ENCODE measurements at regions of chr15 and their contacts with region 1.

Region 1: DNA sequence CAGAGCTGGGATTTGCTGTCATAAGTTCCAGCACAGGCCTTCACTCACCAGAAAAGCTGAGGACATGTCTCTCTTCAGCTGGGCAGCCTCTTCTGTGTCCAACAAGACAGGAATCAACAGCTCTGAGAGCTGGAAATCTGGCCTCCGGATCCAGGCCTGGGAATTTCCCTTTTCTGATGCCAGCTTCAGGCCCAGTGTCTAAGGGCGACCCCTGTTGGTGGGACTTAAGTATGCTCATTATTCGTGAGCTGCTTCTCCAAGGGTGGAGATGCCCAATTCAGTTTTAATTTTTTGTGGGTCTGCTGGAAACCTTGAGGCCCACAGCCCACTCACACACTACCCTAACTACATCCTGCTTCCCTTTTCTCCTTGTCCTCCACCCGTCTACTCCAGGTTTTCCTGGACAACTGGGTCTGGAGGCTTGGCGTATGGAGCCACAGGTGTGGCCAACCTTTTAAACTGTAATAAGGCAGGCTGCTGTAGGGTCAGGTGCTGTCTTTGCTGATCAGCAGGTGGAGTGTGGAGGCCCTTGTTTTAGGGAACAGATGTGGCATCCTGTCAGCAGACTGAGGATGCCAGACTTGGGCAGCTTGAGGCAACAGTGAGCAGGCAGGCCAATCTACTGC is 2.6 kb upstream of the CEMIP start:
- DNase-seq: peak; percentile 77
- CTCF ChIP-seq: peak; percentile 82

Region 2: DNA sequence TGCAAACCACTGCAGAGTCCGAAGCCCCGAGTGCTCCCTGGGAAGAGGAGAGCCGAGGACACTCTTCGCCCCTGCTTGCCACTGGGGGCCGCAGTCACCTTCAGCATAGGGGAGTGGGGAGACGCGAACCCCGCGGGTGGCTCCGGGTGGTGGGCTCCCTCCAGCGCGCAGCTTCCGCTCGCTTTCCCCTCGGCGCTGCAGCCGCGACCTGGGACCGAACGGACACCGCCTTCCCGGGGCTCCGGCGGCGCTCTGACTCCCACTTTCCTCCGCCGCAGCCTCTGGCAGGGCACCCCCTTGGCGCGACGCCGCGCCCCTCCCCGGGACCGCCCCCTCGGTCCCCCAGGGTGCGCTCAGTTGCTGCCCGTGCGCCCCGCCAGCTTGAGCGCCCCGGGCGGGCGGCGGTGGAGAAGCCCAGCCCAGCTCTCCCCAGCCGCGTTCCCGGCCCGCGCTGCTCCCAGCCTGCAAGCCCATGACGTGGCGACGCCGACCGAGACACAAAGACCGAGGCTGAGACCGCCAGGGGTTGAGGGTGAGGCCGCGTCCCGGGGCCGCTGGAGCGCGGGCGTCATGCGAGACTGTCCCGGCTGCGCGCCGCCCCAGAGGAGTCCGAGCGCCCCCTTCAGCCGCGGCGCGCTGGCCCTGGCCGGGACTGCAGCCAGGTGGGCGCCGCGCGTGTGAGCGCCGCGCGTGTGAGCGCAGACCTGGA is 1344.7 kb before region 1 on chr15 and contains the start of gene MINAR1:
- CTCF ChIA-PET with region 1: no interaction called
- POLR2A ChIA-PET with region 1: no interaction called
- DNase-seq: peak; percentile 29
- CTCF ChIP-seq: no peak

Region 3: DNA sequence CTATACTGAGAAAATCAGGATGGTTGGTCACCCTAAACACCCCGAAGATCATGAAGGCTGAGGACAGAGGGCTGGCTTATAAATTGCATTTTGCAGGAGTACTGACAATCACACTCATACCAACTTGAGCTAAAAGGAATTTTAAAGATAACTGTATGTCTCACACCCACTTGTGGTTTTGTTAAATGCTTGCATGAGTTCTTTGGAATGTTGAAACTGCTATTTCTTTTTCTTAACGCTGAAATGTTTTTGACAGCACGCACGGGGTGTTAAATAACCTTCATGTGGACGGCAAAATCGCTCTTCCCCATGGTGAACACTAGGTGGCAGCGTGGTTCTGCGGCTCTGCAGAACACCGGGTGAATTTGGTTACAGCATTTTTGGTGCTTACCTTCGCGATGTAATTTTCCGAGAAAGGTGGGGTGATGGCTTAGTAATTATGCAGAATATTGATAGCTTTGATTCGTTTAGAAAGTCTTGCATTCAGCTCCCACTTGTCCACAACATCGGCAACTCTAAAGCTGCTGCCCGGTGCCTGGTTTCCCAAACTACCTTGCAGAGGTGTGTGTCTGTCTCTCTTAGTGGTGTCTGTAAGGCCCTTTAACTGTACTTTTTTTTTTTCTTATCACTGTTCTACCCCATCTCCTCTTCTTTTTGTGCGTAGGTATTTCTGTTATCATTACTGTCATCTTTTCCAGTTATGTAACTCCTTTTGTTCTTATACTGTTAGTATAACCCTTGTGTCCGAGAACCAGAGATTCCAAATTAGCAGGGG is 320.7 kb before region 1 on chr15:
- CTCF ChIA-PET with region 1: interaction called, 100 read pairs
- POLR2A ChIA-PET with region 1: no interaction called
- DNase-seq: peak; percentile 72
- CTCF ChIP-seq: peak; percentile 91

Region 4: GRCh38 chr15:80567721-80568157 is 208.8 kb before region 1 on chr15:
- CTCF ChIA-PET with region 1: interaction called, 53 read pairs
- POLR2A ChIA-PET with region 1: no interaction called
- DNase-seq: peak; percentile 49
- CTCF ChIP-seq: peak; percentile 40

Region 5: GRCh38 chr15:80789296-80789695 is 12.8 kb after region 1 on chr15:
- CTCF ChIA-PET with region 1: interaction called, 32 read pairs
- POLR2A ChIA-PET with region 1: no interaction called
- DNase-seq: no peak
- CTCF ChIP-seq: no peak

Region 6: GRCh38 chr15:81189583-81190283 is 413.2 kb after region 1 on chr15:
- CTCF ChIA-PET with region 1: no interaction called
- POLR2A ChIA-PET with region 1: no interaction called
- DNase-seq: no peak
- CTCF ChIP-seq: no peak